ENCODE measurements at regions of chr5 and their contacts with region 1.

Region 1: GRCh38 chr5:127564002-127564769 is 46.7 kb downstream of the PRRC1 start:
- DNase-seq: peak in 3 of 5 donors; percentile 25 to 42 (median 35)
- ATAC-seq: peak in 3 of 4 donors; percentile 55 to 74 (median 57)
- H3K4me3 ChIP-seq: no peak overlapping the region
- H3K27ac ChIP-seq: no peak overlapping the region
- H3K4me1 ChIP-seq: peaks cover 0 to 7% (median 0%) of the 10 kb centered on the region in 12 donors
- H3K27me3 ChIP-seq: peaks cover 0 to 3% (median 0%) of the 10 kb centered on the region in 9 donors
- CTCF ChIP-seq: peak; percentile 55 to 76 (median 66)
- POLR2A ChIP-seq: no peak

Region 2: DNA sequence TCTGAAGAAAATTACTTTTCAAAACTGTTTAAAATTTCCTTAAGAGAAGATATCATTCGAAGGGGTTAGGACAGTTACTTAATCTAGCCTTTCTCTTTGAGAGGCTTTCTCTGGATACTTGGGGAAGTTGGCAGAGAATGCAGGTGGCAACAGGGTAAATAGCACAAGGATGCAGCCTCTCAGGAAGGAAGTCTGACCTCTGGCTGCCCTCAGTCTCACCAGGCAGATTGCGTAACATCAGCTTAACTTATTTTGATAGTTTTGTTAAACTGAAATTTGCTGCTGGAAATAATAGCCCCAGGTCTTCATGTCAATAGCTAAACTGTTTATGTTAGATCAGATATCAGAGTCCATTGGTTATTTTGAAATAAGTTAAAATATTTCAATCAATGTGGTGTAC is 159.4 kb after region 1 on chr5:
- intact Hi-C with region 1: loop called in 2 of 10 experiments (anchors 10 kb)
- DNase-seq: peak in 1 of 5 donors; percentile 38
- ATAC-seq: peak in 3 of 4 donors; percentile 52 to 68 (median 61)
- H3K4me3 ChIP-seq: no peak overlapping the region
- H3K27ac ChIP-seq: no peak overlapping the region
- H3K4me1 ChIP-seq: peaks cover 0 to 13% (median 7%) of the 10 kb centered on the region in 12 donors
- H3K27me3 ChIP-seq: no peaks in the 10 kb centered on the region
- CTCF ChIP-seq: no peak
- POLR2A ChIP-seq: no peak

Region 3: DNA sequence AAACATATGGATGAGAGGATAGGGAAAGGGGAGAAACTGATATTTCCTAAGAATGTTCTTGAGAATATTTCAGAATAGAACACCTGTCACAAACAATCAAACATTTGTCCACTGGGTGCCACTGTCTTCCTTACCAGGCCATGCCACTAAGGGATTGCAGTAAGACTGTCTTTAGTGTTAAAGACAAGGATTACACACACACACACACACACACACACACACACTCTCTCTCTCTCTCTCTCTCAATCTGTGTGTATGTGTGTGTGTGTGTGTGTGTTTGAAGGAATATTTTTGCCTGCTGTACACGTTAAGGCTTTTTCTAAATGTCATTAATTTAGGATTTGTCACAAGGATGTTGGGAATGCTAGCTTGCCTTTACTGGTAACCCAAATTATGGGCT is 193.4 kb after region 1 on chr5:
- intact Hi-C with region 1: loop called in 6 of 10 experiments (anchors 10 kb)
- DNase-seq: peak in 2 of 5 donors; percentile 22 to 23
- ATAC-seq: peak; percentile 47 to 88 (median 82)
- H3K4me3 ChIP-seq: no peak overlapping the region
- H3K27ac ChIP-seq: no peak overlapping the region
- H3K4me1 ChIP-seq: peaks cover 0 to 14% (median 5%) of the 10 kb centered on the region in 12 donors
- H3K27me3 ChIP-seq: no peaks in the 10 kb centered on the region
- CTCF ChIP-seq: peak; percentile 32 to 63 (median 46)
- POLR2A ChIP-seq: no peak

Region 4: GRCh38 chr5:127875235-127876021 is 311.2 kb after region 1 on chr5:
- intact Hi-C with region 1: loop called in 3 of 10 experiments (anchors 10 kb)
- DNase-seq: peak; percentile 40 to 80 (median 61)
- ATAC-seq: peak; percentile 83 to 95 (median 93)
- H3K4me3 ChIP-seq: no peak overlapping the region
- H3K27ac ChIP-seq: peak overlapping the region; percentile 18 to 86 (median 68)
- H3K4me1 ChIP-seq: peaks cover 3 to 43% (median 21%) of the 10 kb centered on the region in 12 donors
- H3K27me3 ChIP-seq: no peaks in the 10 kb centered on the region
- CTCF ChIP-seq: peak in 11 of 12 donors; percentile 11 to 54 (median 31)
- POLR2A ChIP-seq: no peak

Region 5: DNA sequence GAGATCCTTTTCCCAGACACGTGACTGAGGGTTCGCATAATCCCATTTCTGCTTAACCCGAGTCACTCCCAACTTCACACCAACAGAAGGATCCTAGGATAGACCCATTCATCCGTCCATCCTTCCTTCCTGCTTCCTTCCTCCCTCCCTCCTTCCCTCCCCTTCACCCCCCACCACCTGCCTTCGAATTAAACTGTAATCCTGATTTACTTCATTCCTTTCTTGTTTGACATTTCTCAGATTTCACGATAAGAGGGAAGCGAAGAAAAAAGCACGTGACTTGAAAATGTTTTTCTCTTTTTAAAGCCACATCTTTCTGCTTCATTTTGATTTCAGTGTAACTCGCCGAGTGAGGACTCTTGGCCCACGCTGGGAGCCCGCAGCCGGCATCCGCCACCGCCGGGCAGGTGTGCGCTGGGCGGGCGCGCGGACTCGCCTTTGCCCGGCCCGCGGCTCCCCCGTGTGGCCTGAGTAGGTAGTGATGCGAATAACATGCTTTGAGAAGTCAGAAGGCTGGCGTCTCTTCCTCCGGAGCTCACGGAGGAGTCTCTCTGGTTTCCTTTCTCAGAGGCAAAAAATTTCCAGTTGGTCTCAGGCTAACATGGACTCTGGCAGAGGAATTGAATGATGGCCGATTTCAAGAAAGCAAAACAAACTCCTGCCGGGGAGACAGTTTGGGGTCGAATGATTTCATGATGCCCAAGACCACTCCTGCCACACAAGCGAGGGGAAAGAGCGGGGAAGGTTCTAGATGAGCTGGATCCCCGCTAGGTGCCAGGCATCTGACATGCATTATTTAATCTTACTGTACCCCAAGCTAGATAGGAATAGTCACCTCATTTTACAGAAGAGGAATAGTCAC is 637.1 kb after region 1 on chr5:
- intact Hi-C with region 1: loop called (anchors 1 to 5 kb)
- DNase-seq: peak; percentile 67 to 88 (median 77)
- ATAC-seq: peak in 3 of 4 donors; percentile 79 to 88 (median 83)
- H3K4me3 ChIP-seq: peak overlapping the region in 6 of 12 donors; percentile 13 to 35 (median 21)
- H3K27ac ChIP-seq: no peak overlapping the region
- H3K4me1 ChIP-seq: peaks cover 0 to 20% (median 5%) of the 10 kb centered on the region in 12 donors
- H3K27me3 ChIP-seq: no peaks in the 10 kb centered on the region
- CTCF ChIP-seq: peak; percentile 82 to 95 (median 88)
- POLR2A ChIP-seq: no peak

Measured in heart left ventricle (tissue), 16 donors.